Activated CD8-positive, alpha-beta memory T cell treated with anti-CD3 and anti-CD28 coated beads, Interleukin-2, amount 10 ng/mL, durations not matched to agents 7 days and 5 days (primary cell): ENCODE measurements at regions of chr12 and their contacts with region 1.

Region 1: GRCh38 chr12:106919910-106920544 is 35.7 kb upstream of the TMEM263 start:
- DNase-seq: no peak
- ATAC-seq: no peak
- H3K4me3 Mint-ChIP-seq: no peak overlapping the region
- H3K27ac Mint-ChIP-seq: no peak overlapping the region
- H3K4me1 Mint-ChIP-seq: peaks cover 8% of the 10 kb centered on the region
- H3K27me3 Mint-ChIP-seq: peaks cover 31% of the 10 kb centered on the region

Region 2: GRCh38 chr12:106357549-106358395 is 562.3 kb before region 1 on chr12 and contains the start of gene POLR3B:
- CTCF ChIA-PET with region 1: interaction called, 18 read pairs
- DNase-seq: peak; percentile 97
- ATAC-seq: peak; percentile 91
- H3K4me3 Mint-ChIP-seq: peak within 1 kb of the TSS; percentile 86
- H3K27ac Mint-ChIP-seq: peak within 1 kb of the TSS; percentile 89
- H3K4me1 Mint-ChIP-seq: peaks cover 13% of the 10 kb centered on the region
- H3K27me3 Mint-ChIP-seq: no peaks in the 10 kb centered on the region
- total RNA-seq, gene POLR3B: 3.7 to 6.3 TPM

Region 3: GRCh38 chr12:106386813-106387535 is 533.1 kb before region 1 on chr12:
- CTCF ChIA-PET with region 1: interaction called, 20 read pairs
- DNase-seq: no peak
- ATAC-seq: no peak
- H3K4me3 Mint-ChIP-seq: no peak overlapping the region
- H3K27ac Mint-ChIP-seq: no peak overlapping the region
- H3K4me1 Mint-ChIP-seq: peaks cover 5% of the 10 kb centered on the region
- H3K27me3 Mint-ChIP-seq: no peaks in the 10 kb centered on the region

Region 4: DNA sequence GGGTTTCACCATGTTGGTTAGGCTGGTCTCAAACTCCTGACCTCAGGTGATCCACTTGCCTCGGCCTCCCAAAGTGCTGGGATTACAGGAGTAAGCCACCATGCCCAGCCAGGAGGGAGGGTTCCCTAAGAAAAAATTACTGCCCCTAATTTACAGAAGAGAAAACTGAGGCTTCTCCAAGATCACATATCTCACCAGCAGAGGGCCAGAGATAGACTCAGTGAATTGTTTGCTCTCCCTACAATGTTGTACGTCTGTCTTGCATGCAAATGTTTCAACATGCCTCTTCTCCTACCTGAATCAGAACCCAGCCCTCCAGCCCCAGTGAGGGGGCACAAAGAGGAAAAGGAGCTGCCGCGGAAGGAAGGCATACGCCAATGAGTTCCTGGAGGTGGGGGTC is 12.6 kb before region 1 on chr12:
- CTCF ChIA-PET with region 1: interaction called, 10 read pairs
- DNase-seq: no peak
- ATAC-seq: no peak
- H3K4me3 Mint-ChIP-seq: no peak overlapping the region
- H3K27ac Mint-ChIP-seq: no peak overlapping the region
- H3K4me1 Mint-ChIP-seq: peaks cover 32% of the 10 kb centered on the region
- H3K27me3 Mint-ChIP-seq: peaks cover 35% of the 10 kb centered on the region